Psoas muscle (tissue), 8 donors: ENCODE measurements at regions of chr9 and their contacts with region 1.

Region 1: GRCh38 chr9:113095561-113095960 is 39.0 kb upstream of the ZFP37 start:
- DNase-seq: no peak
- ATAC-seq: no peak
- H3K4me3 ChIP-seq: no peak overlapping the region
- H3K27ac ChIP-seq: no peak overlapping the region
- H3K4me1 ChIP-seq: no peaks in the 10 kb centered on the region
- H3K27me3 ChIP-seq: peaks cover 8 to 55% (median 10%) of the 10 kb centered on the region in 3 donors
- CTCF ChIP-seq: no peak

Region 2: GRCh38 chr9:113042884-113043657 is 52.5 kb before region 1 on chr9:
- intact Hi-C with region 1: loop called in 1 of 2 experiments (anchors 10 kb)
- DNase-seq: no peak
- ATAC-seq: no peak
- H3K4me3 ChIP-seq: no peak overlapping the region
- H3K27ac ChIP-seq: no peak overlapping the region
- H3K4me1 ChIP-seq: no peaks in the 10 kb centered on the region
- H3K27me3 ChIP-seq: no peaks in the 10 kb centered on the region
- CTCF ChIP-seq: no peak

Region 3: GRCh38 chr9:113131689-113132151 is 36.2 kb after region 1 on chr9:
- intact Hi-C with region 1: no loop called
- DNase-seq: no peak
- ATAC-seq: no peak
- H3K4me3 ChIP-seq: no peak overlapping the region
- H3K27ac ChIP-seq: no peak overlapping the region
- H3K4me1 ChIP-seq: no peaks in the 10 kb centered on the region
- H3K27me3 ChIP-seq: peaks cover 0 to 19% (median 0%) of the 10 kb centered on the region in 3 donors
- CTCF ChIP-seq: no peak